CD4-positive, alpha-beta memory T cell (primary cell): ENCODE measurements at regions of chr18 and their contacts with region 1.

Region 1: DNA sequence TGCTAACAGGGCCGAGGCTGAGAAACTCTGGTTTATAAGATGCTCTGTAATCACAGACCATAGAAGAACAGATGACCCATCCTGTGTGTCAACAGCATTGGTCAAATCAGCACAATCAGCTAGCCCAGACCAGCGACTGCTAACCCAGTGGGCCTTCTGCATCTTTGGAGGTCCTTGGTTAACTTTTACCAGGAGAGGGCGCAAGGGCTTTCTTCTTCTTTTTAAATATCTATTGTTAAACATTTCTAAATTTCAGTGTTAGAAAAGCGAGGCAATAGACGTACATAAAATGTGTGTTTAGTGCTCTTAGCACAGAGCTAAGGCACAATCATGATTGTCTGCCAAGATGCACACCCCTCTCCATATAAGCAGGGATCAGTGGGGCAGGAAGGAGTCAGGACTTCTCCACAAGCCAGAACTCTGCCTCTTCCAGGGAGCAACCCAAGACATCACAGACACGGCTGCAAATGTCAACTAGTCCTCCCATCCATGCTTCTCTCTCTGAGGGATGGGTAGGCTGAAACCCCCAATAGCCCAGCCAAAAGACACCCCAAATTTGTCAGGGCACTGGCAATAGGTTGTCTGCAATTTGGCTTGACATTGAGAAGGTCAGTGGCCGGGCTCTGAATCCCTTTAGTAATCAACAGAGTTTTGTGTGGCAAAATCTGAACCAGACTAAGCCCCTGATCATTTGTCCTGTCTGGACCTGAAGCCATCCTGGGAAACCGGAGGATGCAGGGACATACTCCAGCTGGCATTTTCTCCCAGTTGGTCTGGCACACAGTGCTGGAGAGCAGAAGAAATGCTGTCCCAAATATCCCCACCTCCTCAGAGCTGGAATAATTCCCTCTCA is 188.2 kb downstream of the BCL2 start:
- DNase-seq: peak; percentile 61 to 73 (median 69)
- H3K4me3 ChIP-seq: no peak overlapping the region
- H3K4me3 Mint-ChIP-seq: peak overlapping the region in 5 of 8 donors; percentile 2 to 78 (median 53)
- H3K27ac ChIP-seq: peak overlapping the region; percentile 13
- H3K27ac Mint-ChIP-seq: peak overlapping the region; percentile 84 to 90 (median 89)
- H3K4me1 ChIP-seq: peaks cover 34% of the 10 kb centered on the region
- H3K4me1 Mint-ChIP-seq: peaks cover 31 to 47% (median 34%) of the 10 kb centered on the region in 4 donors
- H3K27me3 ChIP-seq: no peaks in the 10 kb centered on the region
- H3K27me3 Mint-ChIP-seq: no peaks in the 10 kb centered on the region

Region 2: GRCh38 chr18:63016270-63016669 is 115.1 kb before region 1 on chr18:
- CTCF ChIA-PET with region 1: interaction called, 33 read pairs
- POLR2A ChIA-PET with region 1: no interaction called
- intact Hi-C with region 1: loop called (anchors 1 kb)
- DNase-seq: peak; percentile 51 to 62 (median 56)
- H3K4me3 ChIP-seq: no peak overlapping the region
- H3K4me3 Mint-ChIP-seq: no peak overlapping the region
- H3K27ac ChIP-seq: no peak overlapping the region
- H3K27ac Mint-ChIP-seq: no peak overlapping the region
- H3K4me1 ChIP-seq: no peaks in the 10 kb centered on the region
- H3K4me1 Mint-ChIP-seq: peaks cover 0 to 2% (median 0%) of the 10 kb centered on the region in 4 donors
- H3K27me3 ChIP-seq: peaks cover 5% of the 10 kb centered on the region
- H3K27me3 Mint-ChIP-seq: peaks cover 5 to 6% of the 10 kb centered on the region in 2 donors

Region 3: DNA sequence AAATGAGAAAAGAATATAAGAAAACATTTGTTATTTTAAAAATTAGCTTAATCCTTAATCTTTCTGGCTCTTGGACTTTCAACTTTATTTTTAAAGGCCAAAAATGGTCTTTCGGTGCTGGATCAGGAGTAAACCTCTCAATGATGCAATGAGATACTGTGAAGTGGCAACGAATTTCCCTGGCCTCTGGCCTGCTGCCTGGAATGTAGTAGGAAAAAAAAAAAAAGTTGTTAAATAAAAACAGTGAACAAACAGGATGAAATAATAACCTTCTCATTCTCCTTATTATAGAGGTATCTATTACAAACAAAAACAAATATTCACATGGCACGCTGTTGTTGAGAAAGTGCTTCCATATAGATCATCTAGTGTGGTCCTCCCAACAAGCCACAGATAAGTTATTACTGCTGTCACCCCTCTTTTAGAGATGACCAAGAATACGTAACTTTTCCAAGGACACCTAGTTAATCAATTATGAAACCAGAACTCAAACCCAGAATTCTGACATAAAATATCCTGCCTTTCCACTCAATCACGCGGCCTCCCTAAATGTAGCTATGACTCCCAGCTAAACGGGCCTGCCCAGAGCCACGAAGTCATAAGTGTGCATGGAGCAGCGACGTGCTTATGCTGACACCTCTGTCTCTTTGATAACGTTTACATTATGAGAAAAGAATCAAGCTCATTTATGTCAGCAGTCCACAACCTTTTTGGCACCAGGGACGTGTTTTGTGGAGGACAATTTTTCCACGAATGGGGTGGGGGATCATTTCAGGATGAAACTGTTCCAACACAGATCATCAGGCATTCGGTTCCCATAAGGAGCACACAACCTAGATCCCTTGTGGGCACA is 17.3 kb after region 1 on chr18:
- CTCF ChIA-PET with region 1: interaction called, 148 read pairs
- POLR2A ChIA-PET with region 1: interaction called, 54 read pairs
- intact Hi-C with region 1: no loop called
- DNase-seq: no peak
- H3K4me3 ChIP-seq: no peak overlapping the region
- H3K4me3 Mint-ChIP-seq: no peak overlapping the region
- H3K27ac ChIP-seq: no peak overlapping the region
- H3K27ac Mint-ChIP-seq: peak overlapping the region in 3 of 7 donors; percentile 30 to 82 (median 50)
- H3K4me1 ChIP-seq: peaks cover 45% of the 10 kb centered on the region
- H3K4me1 Mint-ChIP-seq: peaks cover 45 to 72% (median 55%) of the 10 kb centered on the region in 4 donors
- H3K27me3 ChIP-seq: no peaks in the 10 kb centered on the region
- H3K27me3 Mint-ChIP-seq: no peaks in the 10 kb centered on the region

Region 4: GRCh38 chr18:63339920-63340484 is 208.7 kb after region 1 on chr18:
- CTCF ChIA-PET with region 1: interaction called, 17 read pairs
- POLR2A ChIA-PET with region 1: no interaction called
- intact Hi-C with region 1: no loop called
- DNase-seq: peak in 4 of 5 donors; percentile 43 to 51 (median 49)
- H3K4me3 ChIP-seq: no peak overlapping the region
- H3K4me3 Mint-ChIP-seq: no peak overlapping the region
- H3K27ac ChIP-seq: no peak overlapping the region
- H3K27ac Mint-ChIP-seq: peak overlapping the region in 3 of 7 donors; percentile 43 to 69 (median 69)
- H3K4me1 ChIP-seq: no peaks in the 10 kb centered on the region
- H3K4me1 Mint-ChIP-seq: peaks cover 0 to 7% (median 1%) of the 10 kb centered on the region in 4 donors
- H3K27me3 ChIP-seq: no peaks in the 10 kb centered on the region
- H3K27me3 Mint-ChIP-seq: no peaks in the 10 kb centered on the region

Region 5: GRCh38 chr18:63405986-63406385 is 274.7 kb after region 1 on chr18:
- CTCF ChIA-PET with region 1: no interaction called
- POLR2A ChIA-PET with region 1: no interaction called
- intact Hi-C with region 1: no loop called
- DNase-seq: no peak
- H3K4me3 ChIP-seq: no peak overlapping the region
- H3K4me3 Mint-ChIP-seq: no peak overlapping the region
- H3K27ac ChIP-seq: no peak overlapping the region
- H3K27ac Mint-ChIP-seq: peak overlapping the region in 3 of 7 donors; percentile 2 to 36 (median 35)
- H3K4me1 ChIP-seq: peaks cover 27% of the 10 kb centered on the region
- H3K4me1 Mint-ChIP-seq: peaks cover 27 to 34% (median 33%) of the 10 kb centered on the region in 4 donors
- H3K27me3 ChIP-seq: no peaks in the 10 kb centered on the region
- H3K27me3 Mint-ChIP-seq: no peaks in the 10 kb centered on the region

Region 6: DNA sequence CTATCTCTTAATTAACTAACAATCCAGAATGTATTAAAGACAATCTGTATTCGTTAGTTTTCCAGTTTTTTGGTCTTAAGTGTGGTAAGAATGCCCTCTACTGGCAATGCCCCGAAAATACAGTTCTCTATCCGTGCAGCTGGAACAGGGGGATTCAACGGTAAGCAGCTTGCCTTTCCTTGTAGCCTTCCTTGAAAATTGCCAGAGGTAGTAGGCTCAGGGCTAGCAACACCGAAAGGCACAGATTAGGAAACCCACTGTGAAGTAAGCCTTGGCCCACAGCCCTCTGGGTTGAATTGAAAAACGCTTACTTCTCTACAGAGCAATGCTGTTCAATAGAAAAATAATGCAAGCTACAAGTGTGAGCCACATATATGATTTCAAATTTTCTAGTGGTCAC is 308.0 kb after region 1 on chr18:
- CTCF ChIA-PET with region 1: interaction called, 18 read pairs
- POLR2A ChIA-PET with region 1: no interaction called
- intact Hi-C with region 1: loop called (anchors 1 kb)
- DNase-seq: peak in 4 of 5 donors; percentile 54 to 58 (median 56)
- H3K4me3 ChIP-seq: no peak overlapping the region
- H3K4me3 Mint-ChIP-seq: peak overlapping the region in 1 of 8 donors; percentile 32
- H3K27ac ChIP-seq: no peak overlapping the region
- H3K27ac Mint-ChIP-seq: no peak overlapping the region
- H3K4me1 ChIP-seq: no peaks in the 10 kb centered on the region
- H3K4me1 Mint-ChIP-seq: peaks cover 0 to 3% (median 2%) of the 10 kb centered on the region in 4 donors
- H3K27me3 ChIP-seq: peaks cover 3% of the 10 kb centered on the region
- H3K27me3 Mint-ChIP-seq: peaks cover 0 to 9% of the 10 kb centered on the region in 2 donors